ENCODE measurements at regions of chr4 and their contacts with region 1.

Region 1: DNA sequence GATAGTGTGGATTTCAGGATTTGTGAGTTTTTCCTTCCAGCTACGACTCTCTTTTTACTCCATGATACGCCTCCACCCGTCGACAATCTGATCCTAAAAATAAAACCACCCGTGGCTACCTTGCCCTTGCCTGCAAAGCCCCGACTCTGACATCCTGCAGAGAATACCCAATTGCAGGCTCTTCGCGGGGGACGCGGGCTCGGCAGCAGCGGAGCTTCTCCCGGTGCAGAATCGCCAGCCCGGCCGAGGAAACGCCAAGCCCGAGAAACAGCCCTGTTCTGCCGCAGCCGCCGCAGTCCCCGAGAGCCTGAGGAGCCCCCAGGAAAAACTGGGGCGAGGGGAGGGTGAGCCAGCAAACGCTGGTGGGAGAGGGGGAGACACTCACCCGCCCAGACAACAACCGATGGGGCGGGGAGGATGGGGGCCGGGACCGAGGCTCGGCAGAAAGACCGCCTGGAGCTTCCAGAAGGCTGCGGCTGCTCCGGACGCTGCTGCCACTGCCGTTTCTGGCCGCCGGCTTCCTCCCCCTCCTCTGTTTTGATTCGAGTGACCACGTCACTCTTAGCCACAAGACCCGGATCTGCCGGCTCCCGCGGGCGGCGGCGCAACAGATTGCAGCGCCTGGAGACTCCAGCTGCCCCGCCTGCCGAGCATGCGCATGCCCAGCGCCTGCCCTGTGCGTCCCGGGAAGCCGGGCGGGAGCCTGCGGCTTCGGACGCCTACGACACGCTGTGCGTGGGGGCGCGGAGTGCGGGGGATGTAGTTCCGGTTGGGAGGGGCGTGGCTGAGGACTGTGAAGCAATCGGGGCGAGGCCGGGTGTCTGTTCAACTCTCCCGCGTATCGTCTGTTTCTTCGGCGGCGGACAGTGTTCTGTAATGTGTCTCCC is at the start of gene SMIM14:
- DNase-seq: no peak
- ATAC-seq: peak; percentile 82
- H3K4me3 ChIP-seq: peak within 1 kb of the TSS; percentile 75
- H3K27ac ChIP-seq: peak within 1 kb of the TSS; percentile 43
- H3K4me1 ChIP-seq: peaks cover 5% of the 10 kb centered on the region; the same call in 1 of the 2 replicates
- H3K27me3 ChIP-seq: no peaks in the 10 kb centered on the region
- CTCF ChIP-seq: no peak
- EP300 ChIP-seq: peak; percentile 34 to 50; a peak in 1 of 4 replicates
- POLR2A ChIP-seq: peak; percentile 88
- RAD21 ChIP-seq: no peak; the same call in 1 of the 2 replicates
- polyA plus RNA-seq, gene SMIM14: 585 to 671 TPM

Region 2: GRCh38 chr4:39469429-39470077 is 169.0 kb before region 1 on chr4:
- CTCF ChIA-PET with region 1: interaction called, 9 read pairs
- POLR2A ChIA-PET with region 1: interaction called, 5 read pairs
- RAD21 ChIA-PET with region 1: interaction called, 9 read pairs
- SMC1A ChIA-PET with region 1: interaction called, 5 read pairs
- in situ Hi-C with region 1: no loop called
- intact Hi-C with region 1: loop called (anchors 5 kb)
- DNase-seq: peak; percentile 48
- ATAC-seq: peak; percentile 95
- H3K4me3 ChIP-seq: no peak overlapping the region
- H3K27ac ChIP-seq: peak overlapping the region; percentile 75; the same call in 1 of the 2 replicates
- H3K4me1 ChIP-seq: peaks cover 7% of the 10 kb centered on the region
- H3K27me3 ChIP-seq: no peaks in the 10 kb centered on the region
- CTCF ChIP-seq: peak; percentile 61 to 79 (median 79); a peak in 4 of 6 replicates
- EP300 ChIP-seq: no peak
- POLR2A ChIP-seq: no peak
- RAD21 ChIP-seq: peak; percentile 90

Region 3: GRCh38 chr4:39502019-39502663 is 136.5 kb before region 1 on chr4:
- CTCF ChIA-PET with region 1: no interaction called
- POLR2A ChIA-PET with region 1: no interaction called
- RAD21 ChIA-PET with region 1: no interaction called
- SMC1A ChIA-PET with region 1: no interaction called
- in situ Hi-C with region 1: no loop called
- intact Hi-C with region 1: no loop called
- DNase-seq: no peak
- ATAC-seq: no peak
- H3K4me3 ChIP-seq: no peak overlapping the region
- H3K27ac ChIP-seq: no peak overlapping the region
- H3K4me1 ChIP-seq: no peaks in the 10 kb centered on the region
- H3K27me3 ChIP-seq: no peaks in the 10 kb centered on the region
- CTCF ChIP-seq: no peak
- EP300 ChIP-seq: no peak
- POLR2A ChIP-seq: no peak
- RAD21 ChIP-seq: no peak

Region 4: DNA sequence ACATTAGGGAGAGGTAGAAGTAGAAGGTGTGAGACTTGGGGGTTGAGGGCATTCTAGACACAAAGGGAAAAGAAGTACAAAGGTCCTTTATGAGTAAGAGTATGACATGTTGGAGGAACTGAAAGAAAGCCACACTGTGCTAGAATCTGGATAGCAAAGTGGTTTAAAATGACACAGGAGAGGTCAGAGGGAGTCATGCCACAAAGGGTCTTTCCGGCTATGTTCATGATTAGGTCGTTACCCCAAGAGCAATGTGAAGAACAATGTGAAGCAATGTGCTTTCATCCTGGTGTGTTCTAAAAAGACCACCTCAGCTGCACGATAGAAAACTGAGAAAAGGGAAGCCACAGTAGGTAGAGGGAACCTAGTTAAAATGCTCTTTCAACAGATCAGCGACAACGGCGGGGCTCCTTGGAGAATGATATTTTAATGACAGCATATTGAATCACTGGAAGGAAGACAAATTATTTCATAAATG is 29.1 kb before region 1 on chr4:
- CTCF ChIA-PET with region 1: interaction called, 10 read pairs
- POLR2A ChIA-PET with region 1: interaction called, 129 read pairs
- RAD21 ChIA-PET with region 1: interaction called, 217 read pairs
- SMC1A ChIA-PET with region 1: interaction called, 254 read pairs
- in situ Hi-C with region 1: no loop called
- intact Hi-C with region 1: loop called (anchors 2 kb)
- DNase-seq: peak; percentile 96
- ATAC-seq: peak; percentile 91
- H3K4me3 ChIP-seq: 0 out of 2 replicates have a peak overlapping the region, but pooled peaks have one; percentile 39
- H3K27ac ChIP-seq: peak overlapping the region; percentile 80
- H3K4me1 ChIP-seq: peaks cover 49% of the 10 kb centered on the region
- H3K27me3 ChIP-seq: no peaks in the 10 kb centered on the region
- CTCF ChIP-seq: no peak
- EP300 ChIP-seq: peak; percentile 97 to 100
- POLR2A ChIP-seq: 0 out of 2 replicates have a peak, but pooled peaks have one; percentile 29
- RAD21 ChIP-seq: no peak; the same call in 1 of the 2 replicates

Region 5: GRCh38 chr4:39657465-39657864 is 18.9 kb after region 1 on chr4:
- CTCF ChIA-PET with region 1: interaction called, 15 read pairs
- POLR2A ChIA-PET with region 1: interaction called, 7 read pairs
- RAD21 ChIA-PET with region 1: interaction called, 31 read pairs
- SMC1A ChIA-PET with region 1: interaction called, 23 read pairs
- in situ Hi-C with region 1: no loop called
- intact Hi-C with region 1: loop called (anchors 1 kb)
- DNase-seq: peak; percentile 67
- ATAC-seq: peak; percentile 88
- H3K4me3 ChIP-seq: no peak overlapping the region
- H3K27ac ChIP-seq: peak overlapping the region; percentile 3; the same call in 1 of the 2 replicates
- H3K4me1 ChIP-seq: peaks cover 31% of the 10 kb centered on the region
- H3K27me3 ChIP-seq: no peaks in the 10 kb centered on the region
- CTCF ChIP-seq: no peak
- EP300 ChIP-seq: peak in 1 of 2 experiments; percentile 76; a peak in 3 of 4 replicates
- POLR2A ChIP-seq: no peak
- RAD21 ChIP-seq: 0 out of 2 replicates have a peak, but pooled peaks have one; percentile 11

Measured in GM12878 (cell line).